Left cardiac atrium (tissue), 4 donors: ENCODE measurements at regions of chr12 and their contacts with region 1.

Region 1: DNA sequence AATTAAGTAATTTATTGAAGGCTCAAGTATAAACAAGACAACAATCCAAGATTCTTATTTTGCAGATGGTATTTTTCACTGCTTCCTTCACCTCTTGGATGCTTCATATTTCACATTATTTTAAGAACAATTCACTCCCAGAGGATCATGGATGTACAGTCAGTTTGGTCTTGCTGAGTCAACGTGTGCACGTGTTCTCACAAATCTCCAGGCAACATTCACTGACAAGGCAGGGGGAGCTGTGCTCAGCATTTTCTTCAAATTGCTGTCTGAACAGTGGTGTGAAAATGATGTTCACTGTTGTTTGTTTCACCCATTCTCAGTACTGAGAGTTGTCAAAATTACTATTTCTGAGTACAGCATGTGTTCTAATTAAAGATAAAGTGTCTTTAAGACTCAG is 118.3 kb upstream of the SLC38A4 start:
- DNase-seq: no peak
- ATAC-seq: peak; percentile 53 to 71

Region 2: GRCh38 chr12:46523863-46524770 is 420.0 kb before region 1 on chr12:
- intact Hi-C with region 1: no loop called
- DNase-seq: no peak
- ATAC-seq: peak in 1 of 2 donors; percentile 69

Region 3: GRCh38 chr12:46983393-46984266 is 39.5 kb after region 1 on chr12:
- intact Hi-C with region 1: loop called in 1 of 2 experiments (anchors 5 kb)
- DNase-seq: no peak
- ATAC-seq: peak; percentile 53 to 75